CD14-positive monocyte (primary cell): ENCODE measurements at regions of chr11 and their contacts with region 1.

Region 1: GRCh38 chr11:86671682-86672621 is at the start of gene ME3:
- DNase-seq: peak; percentile 59 to 76 (median 64)
- H3K4me3 ChIP-seq: peak within 1 kb of the TSS; percentile 53 to 90 (median 79)
- H3K4me3 Mint-ChIP-seq: peak within 1 kb of the TSS; percentile 92 to 95
- H3K27ac ChIP-seq: peak within 1 kb of the TSS in 1 of 2 donors; percentile 41
- H3K27ac Mint-ChIP-seq: peak within 1 kb of the TSS in 6 of 7 donors; percentile 22 to 74 (median 55)
- H3K4me1 ChIP-seq: peaks cover 8 to 15% of the 10 kb centered on the region in 2 donors
- H3K4me1 Mint-ChIP-seq: peaks cover 21% of the 10 kb centered on the region
- H3K27me3 ChIP-seq: peaks cover 5 to 13% of the 10 kb centered on the region in 2 donors
- H3K27me3 Mint-ChIP-seq: peaks cover 13 to 30% (median 19%) of the 10 kb centered on the region in 3 donors
- CTCF ChIP-seq: no peak
- polyA plus RNA-seq, gene ME3: 0.31 to 3.0 (median 0.42) TPM

Region 2: GRCh38 chr11:86802601-86803051 is 130.7 kb after region 1 on chr11:
- intact Hi-C with region 1: loop called in 1 of 2 experiments (anchors 10 kb)
- DNase-seq: no peak
- H3K4me3 ChIP-seq: no peak overlapping the region
- H3K4me3 Mint-ChIP-seq: no peak overlapping the region
- H3K27ac ChIP-seq: no peak overlapping the region
- H3K27ac Mint-ChIP-seq: no peak overlapping the region
- H3K4me1 ChIP-seq: peaks cover 7 to 9% of the 10 kb centered on the region in 2 donors
- H3K4me1 Mint-ChIP-seq: peaks cover 19% of the 10 kb centered on the region
- H3K27me3 ChIP-seq: peaks cover 39 to 49% of the 10 kb centered on the region in 2 donors
- H3K27me3 Mint-ChIP-seq: peaks cover 36 to 54% (median 52%) of the 10 kb centered on the region in 3 donors
- CTCF ChIP-seq: no peak